H1 (cell line): ENCODE measurements at regions of chr6 and their contacts with region 1.

Region 1: DNA sequence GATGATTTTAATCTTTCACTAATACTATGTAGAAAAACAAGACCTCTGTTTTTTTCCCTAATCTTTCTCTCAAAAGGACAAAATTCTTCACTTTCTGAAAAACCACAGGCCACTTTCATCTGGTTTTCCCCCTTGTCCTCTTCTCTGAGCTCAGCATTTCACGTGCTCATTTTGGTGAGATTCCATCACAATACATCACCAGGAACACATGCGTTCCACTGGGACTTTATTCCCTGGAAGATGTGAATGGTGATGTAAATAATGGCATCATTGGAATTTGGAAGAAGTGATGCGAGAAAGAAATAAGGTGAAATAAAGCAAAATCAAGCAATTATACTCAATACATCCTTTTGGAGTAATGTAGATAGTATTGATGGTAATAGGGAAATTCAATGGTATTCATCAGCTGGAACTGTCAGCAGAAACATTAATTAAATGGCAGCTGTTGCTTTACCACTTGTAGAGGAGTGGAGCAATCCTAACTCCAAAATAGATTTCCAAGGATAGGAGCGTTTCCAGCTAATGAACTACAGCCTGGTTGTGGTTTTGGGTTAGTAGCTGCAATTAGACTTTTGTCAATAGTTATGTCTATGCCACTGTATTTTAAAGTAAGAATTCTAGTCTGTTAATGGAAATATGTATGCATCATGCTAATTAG is 11.5 kb downstream of the FILIP1 start:
- DNase-seq: no peak
- H3K4me3 ChIP-seq: no peak overlapping the region
- H3K27ac ChIP-seq: no peak overlapping the region
- H3K4me1 ChIP-seq: peaks cover 0 to 10% (median 3%) of the 10 kb centered on the region in 4 experiments; a peak in 3 of 7 replicates
- H3K27me3 ChIP-seq: no peaks in the 10 kb centered on the region
- CTCF ChIP-seq: no peak
- EP300 ChIP-seq: no peak
- POLR2A ChIP-seq: no peak
- RAD21 ChIP-seq: no peak

Region 2: DNA sequence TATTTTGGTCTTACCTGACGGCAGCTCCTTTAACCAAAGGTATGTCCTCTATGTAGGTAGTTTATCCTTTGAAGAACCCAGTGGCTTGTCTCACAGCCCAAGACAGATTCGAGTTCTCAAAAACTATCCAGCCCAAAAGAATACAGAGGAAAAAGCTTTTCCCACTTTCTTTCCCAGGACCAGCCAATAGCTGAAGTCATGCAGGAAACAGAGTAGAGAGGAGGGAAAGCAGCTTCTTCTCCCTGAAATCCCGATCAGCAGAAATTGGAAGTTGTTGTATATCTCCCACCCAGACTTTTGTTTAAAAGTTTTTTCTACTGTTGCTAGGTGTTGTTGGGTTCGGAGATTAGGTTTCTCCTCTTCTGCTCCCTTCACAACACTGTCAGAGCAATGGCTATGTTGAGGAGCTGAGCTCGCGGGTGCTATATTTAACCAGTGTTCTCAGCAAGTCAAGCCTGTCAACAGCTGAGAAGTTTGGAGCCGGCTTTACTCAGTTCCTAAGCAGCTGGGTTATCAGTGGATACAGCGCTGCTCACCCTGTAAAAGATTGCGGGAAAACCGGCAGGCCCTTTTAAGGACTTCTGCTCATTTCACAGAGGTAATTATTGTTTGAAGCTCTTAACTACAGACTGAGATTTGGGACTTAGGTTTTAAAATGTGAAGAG is 11.5 kb after region 1 on chr6 and contains the start of gene FILIP1:
- CTCF ChIA-PET with region 1: interaction called, 12 read pairs
- POLR2A ChIA-PET with region 1: no interaction called
- DNase-seq: no peak
- H3K4me3 ChIP-seq: no peak within 1 kb of the TSS
- H3K27ac ChIP-seq: no peak within 1 kb of the TSS
- H3K4me1 ChIP-seq: peaks cover 0 to 3% (median 0%) of the 10 kb centered on the region in 4 experiments; a peak in 3 of 7 replicates
- H3K27me3 ChIP-seq: no peaks in the 10 kb centered on the region
- CTCF ChIP-seq: no peak
- EP300 ChIP-seq: no peak
- POLR2A ChIP-seq: no peak
- RAD21 ChIP-seq: no peak
- total RNA-seq, gene FILIP1: 5.0 and 5.7 TPM in 2 replicates